SK-N-SH (cell line): ENCODE measurements at regions of chr3 and their contacts with region 1.

Region 1: GRCh38 chr3:52339612-52340011 is 23.5 kb downstream of the DNAH1 start:
- DNase-seq: peak; percentile 68
- H3K4me3 ChIP-seq: peak overlapping the region in 1 of 2 experiments; percentile 5; a peak in 1 of 4 replicates
- H3K27ac ChIP-seq: no peak overlapping the region
- H3K4me1 ChIP-seq: peaks cover 0 to 3% of the 10 kb centered on the region in 2 experiments; a peak in 1 of 4 replicates
- H3K27me3 ChIP-seq: no peaks in the 10 kb centered on the region
- CTCF ChIP-seq: peak; percentile 83
- EP300 ChIP-seq: no peak
- RAD21 ChIP-seq: peak; percentile 95

Region 2: DNA sequence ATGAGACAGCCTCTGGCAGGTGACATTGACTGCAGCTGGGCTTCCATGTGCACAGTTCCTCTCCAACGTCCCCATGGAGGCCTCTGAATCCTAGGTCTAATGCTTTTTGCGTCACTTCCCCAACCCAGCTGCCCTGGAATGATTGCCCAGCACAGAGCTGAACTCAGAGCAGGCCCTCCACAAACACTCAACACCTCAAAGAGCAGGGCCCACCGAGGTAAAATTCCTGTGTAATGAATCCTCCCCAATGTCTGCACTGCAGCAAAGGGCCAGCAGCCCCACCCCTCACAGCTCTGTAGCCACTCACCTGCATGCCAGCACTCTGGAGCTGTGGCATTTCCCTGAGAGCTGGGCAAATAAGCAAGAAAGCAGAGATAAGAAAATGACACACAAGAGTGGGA is 240.6 kb before region 1 on chr3:
- CTCF ChIA-PET with region 1: no interaction called
- POLR2A ChIA-PET with region 1: no interaction called
- DNase-seq: no peak
- H3K4me3 ChIP-seq: no peak overlapping the region
- H3K27ac ChIP-seq: no peak overlapping the region
- H3K4me1 ChIP-seq: peaks cover 4 to 7% of the 10 kb centered on the region in 2 experiments; a peak in 2 of 4 replicates
- H3K27me3 ChIP-seq: no peaks in the 10 kb centered on the region
- CTCF ChIP-seq: no peak
- EP300 ChIP-seq: no peak
- RAD21 ChIP-seq: no peak

Region 3: GRCh38 chr3:52231502-52232293 is 107.9 kb before region 1 on chr3:
- CTCF ChIA-PET with region 1: interaction called, 109 read pairs
- POLR2A ChIA-PET with region 1: no interaction called
- DNase-seq: peak; percentile 90
- H3K4me3 ChIP-seq: no peak overlapping the region
- H3K27ac ChIP-seq: no peak overlapping the region
- H3K4me1 ChIP-seq: peaks cover 2 to 15% of the 10 kb centered on the region in 2 experiments; a peak in 3 of 4 replicates
- H3K27me3 ChIP-seq: no peaks in the 10 kb centered on the region
- CTCF ChIP-seq: peak; percentile 75
- EP300 ChIP-seq: no peak
- RAD21 ChIP-seq: peak; percentile 62

Region 4: DNA sequence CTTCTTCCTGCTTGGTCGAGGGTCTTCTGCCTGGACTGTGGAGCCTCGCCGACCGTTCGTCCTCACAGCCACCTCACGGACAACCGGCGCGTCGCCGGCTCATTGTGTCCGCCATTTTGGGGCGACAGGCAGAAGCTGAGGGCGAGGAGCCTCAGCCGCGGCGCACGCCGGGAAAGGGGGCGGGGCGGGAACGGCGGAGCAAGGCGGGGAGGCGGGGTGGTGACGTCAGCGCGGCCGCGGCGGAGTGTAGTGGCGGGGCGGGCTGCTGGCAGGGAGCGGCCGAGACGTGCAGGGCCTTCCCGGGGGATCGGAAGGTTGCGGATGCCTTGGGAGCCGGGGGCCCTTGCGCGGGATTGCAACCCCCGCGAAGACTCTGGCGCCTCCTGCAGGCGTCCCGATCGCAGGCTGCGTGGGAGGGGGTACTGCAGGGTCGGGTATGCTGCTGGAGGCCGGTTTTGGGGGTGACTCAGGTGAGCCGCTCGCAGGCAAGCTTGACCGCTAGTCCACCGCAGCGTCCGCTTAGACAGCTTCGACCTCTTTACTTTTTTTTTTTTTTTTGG is 61.0 kb before region 1 on chr3 and contains the start of gene WDR82:
- CTCF ChIA-PET with region 1: interaction called, 33 read pairs
- POLR2A ChIA-PET with region 1: interaction called, 3 read pairs
- DNase-seq: peak; percentile 98
- H3K4me3 ChIP-seq: peak within 1 kb of the TSS; percentile 71 to 92
- H3K27ac ChIP-seq: peak within 1 kb of the TSS; percentile 90 to 97
- H3K4me1 ChIP-seq: peaks cover 11 to 20% of the 10 kb centered on the region in 2 experiments; a peak in 3 of 4 replicates
- H3K27me3 ChIP-seq: no peaks in the 10 kb centered on the region
- CTCF ChIP-seq: peak; percentile 61
- EP300 ChIP-seq: no peak
- RAD21 ChIP-seq: peak; percentile 38
- polyA plus RNA-seq, gene WDR82: 41.2 and 57.8 TPM in 2 replicates

Region 5: GRCh38 chr3:52308308-52308707 is 31.3 kb before region 1 on chr3:
- CTCF ChIA-PET with region 1: interaction called, 19 read pairs
- POLR2A ChIA-PET with region 1: interaction called, 5 read pairs
- DNase-seq: no peak
- H3K4me3 ChIP-seq: no peak overlapping the region
- H3K27ac ChIP-seq: peak overlapping the region in 1 of 2 experiments; percentile 98; a peak in 2 of 4 replicates
- H3K4me1 ChIP-seq: peaks cover 9 to 79% of the 10 kb centered on the region in 2 experiments; a peak in 3 of 4 replicates
- H3K27me3 ChIP-seq: no peaks in the 10 kb centered on the region
- CTCF ChIP-seq: no peak
- EP300 ChIP-seq: no peak
- RAD21 ChIP-seq: no peak

Region 6: GRCh38 chr3:52323526-52324295 is 15.9 kb before region 1 on chr3:
- CTCF ChIA-PET with region 1: interaction called, 81 read pairs
- POLR2A ChIA-PET with region 1: no interaction called
- DNase-seq: no peak
- H3K4me3 ChIP-seq: no peak overlapping the region
- H3K27ac ChIP-seq: no peak overlapping the region; a peak in 1 of 4 replicates
- H3K4me1 ChIP-seq: peaks cover 0 to 21% of the 10 kb centered on the region in 2 experiments; a peak in 1 of 4 replicates
- H3K27me3 ChIP-seq: no peaks in the 10 kb centered on the region
- CTCF ChIP-seq: no peak
- EP300 ChIP-seq: no peak
- RAD21 ChIP-seq: no peak

Region 7: GRCh38 chr3:52361898-52362297 is 22.3 kb after region 1 on chr3:
- CTCF ChIA-PET with region 1: interaction called, 13 read pairs
- POLR2A ChIA-PET with region 1: no interaction called
- DNase-seq: no peak
- H3K4me3 ChIP-seq: no peak overlapping the region
- H3K27ac ChIP-seq: no peak overlapping the region
- H3K4me1 ChIP-seq: no peaks in the 10 kb centered on the region
- H3K27me3 ChIP-seq: no peaks in the 10 kb centered on the region
- CTCF ChIP-seq: no peak
- EP300 ChIP-seq: no peak
- RAD21 ChIP-seq: no peak

Region 8: DNA sequence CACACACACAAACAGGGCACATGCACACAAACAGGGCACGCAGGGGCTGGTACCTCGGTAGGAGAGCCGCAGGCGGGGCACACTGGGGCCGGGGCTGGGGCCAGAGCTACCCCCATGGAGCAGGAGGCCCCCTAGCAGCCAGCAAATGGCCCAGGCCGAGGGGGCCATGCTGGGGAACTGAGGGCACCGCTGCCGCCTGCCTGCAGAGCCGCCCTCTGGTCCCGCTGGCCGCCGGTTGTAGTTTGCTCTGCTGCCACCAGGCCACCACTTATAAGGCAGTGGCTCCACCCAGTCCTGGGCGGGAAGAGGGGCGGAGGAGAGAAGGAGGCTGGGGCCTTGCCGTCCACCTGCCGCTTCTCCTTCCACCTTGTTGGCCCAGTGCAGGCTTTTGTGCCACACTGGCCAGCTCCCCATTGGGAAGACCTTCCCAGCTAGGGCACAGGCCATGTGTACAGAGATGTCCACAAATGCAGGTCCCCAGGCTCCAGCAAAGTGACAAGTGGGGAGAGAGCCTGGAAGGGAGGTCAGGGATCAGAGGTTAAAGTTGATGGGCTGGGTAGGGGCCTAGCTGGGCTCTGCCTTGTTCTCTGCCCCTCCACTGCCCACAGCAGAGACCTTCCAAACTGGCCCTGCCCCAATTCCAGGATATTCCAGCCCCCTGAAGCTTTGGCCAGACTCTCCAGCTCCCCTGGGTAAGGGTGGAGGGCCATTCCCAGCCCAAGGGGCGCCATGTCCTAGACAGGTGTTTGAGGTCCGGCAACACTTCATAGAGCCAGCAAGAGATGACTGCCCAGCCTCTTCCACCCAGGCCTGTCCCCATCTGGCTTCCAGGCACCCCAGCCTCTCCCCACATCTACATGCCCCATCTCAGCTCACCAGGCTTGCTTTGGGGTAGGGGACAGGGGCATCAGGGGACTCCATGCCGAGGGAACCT is 105.5 kb after region 1 on chr3 and contains the start of gene SEMA3G:
- CTCF ChIA-PET with region 1: interaction called, 12 read pairs
- POLR2A ChIA-PET with region 1: no interaction called
- DNase-seq: peak; percentile 84
- H3K4me3 ChIP-seq: no peak within 1 kb of the TSS
- H3K27ac ChIP-seq: no peak within 1 kb of the TSS
- H3K4me1 ChIP-seq: peaks cover 0 to 5% of the 10 kb centered on the region in 2 experiments; a peak in 1 of 4 replicates
- H3K27me3 ChIP-seq: no peaks in the 10 kb centered on the region
- CTCF ChIP-seq: peak; percentile 40; the same call in 1 of the 2 replicates
- EP300 ChIP-seq: no peak
- RAD21 ChIP-seq: no peak
- polyA plus RNA-seq, gene SEMA3G: 0.10 and 0.13 TPM in 2 replicates

Region 9: GRCh38 chr3:53354945-53355498 is 1015.4 kb after region 1 on chr3:
- CTCF ChIA-PET with region 1: no interaction called
- POLR2A ChIA-PET with region 1: no interaction called
- DNase-seq: no peak
- H3K4me3 ChIP-seq: no peak overlapping the region
- H3K27ac ChIP-seq: no peak overlapping the region
- H3K4me1 ChIP-seq: peaks cover 0 to 3% of the 10 kb centered on the region in 2 experiments; a peak in 1 of 4 replicates
- H3K27me3 ChIP-seq: no peaks in the 10 kb centered on the region
- CTCF ChIP-seq: no peak
- EP300 ChIP-seq: no peak
- RAD21 ChIP-seq: no peak